ENCODE measurements at regions of chr18 and their contacts with region 1.

Region 1: DNA sequence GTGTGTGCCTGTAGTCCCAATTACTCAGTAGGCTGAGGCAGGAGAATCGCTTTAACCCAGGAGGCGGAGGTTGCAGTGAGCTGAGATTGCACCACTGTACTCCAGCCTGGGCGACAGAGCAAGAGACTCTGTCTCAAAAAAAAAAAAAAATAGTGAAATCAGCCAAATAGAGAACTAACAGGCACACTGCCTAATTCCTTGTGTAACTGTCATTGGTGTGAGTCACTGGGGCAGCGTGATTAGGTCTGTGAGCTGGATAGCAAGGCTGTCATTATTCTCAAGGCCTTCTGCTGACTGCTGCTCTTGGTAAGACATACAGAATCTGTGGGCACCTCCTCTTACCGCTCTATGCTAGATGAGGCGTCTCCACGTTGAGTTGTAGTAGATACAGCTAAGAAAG is 270.3 kb downstream of the NEDD4L start:
- DNase-seq: peak in 1 of 2 donors; percentile 46
- ATAC-seq: peak; percentile 69 to 80 (median 76)
- H3K4me3 ChIP-seq: no peak overlapping the region
- H3K27ac ChIP-seq: peak overlapping the region; percentile 23 to 79 (median 70)
- H3K4me1 ChIP-seq: peaks cover 19 to 73% (median 49%) of the 10 kb centered on the region in 9 donors
- H3K27me3 ChIP-seq: no peaks in the 10 kb centered on the region
- CTCF ChIP-seq: no peak

Region 2: GRCh38 chr18:57621246-57621604 is 693.1 kb before region 1 on chr18:
- intact Hi-C with region 1: loop called in 1 of 10 experiments (anchors 10 kb)
- DNase-seq: no peak
- ATAC-seq: peak; percentile 10 to 66 (median 46)
- H3K4me3 ChIP-seq: peak overlapping the region; percentile 71 to 89 (median 80)
- H3K27ac ChIP-seq: peak overlapping the region; percentile 72 to 95 (median 90)
- H3K4me1 ChIP-seq: peaks cover 0 to 37% (median 19%) of the 10 kb centered on the region in 9 donors
- H3K27me3 ChIP-seq: no peaks in the 10 kb centered on the region
- CTCF ChIP-seq: no peak

Region 3: DNA sequence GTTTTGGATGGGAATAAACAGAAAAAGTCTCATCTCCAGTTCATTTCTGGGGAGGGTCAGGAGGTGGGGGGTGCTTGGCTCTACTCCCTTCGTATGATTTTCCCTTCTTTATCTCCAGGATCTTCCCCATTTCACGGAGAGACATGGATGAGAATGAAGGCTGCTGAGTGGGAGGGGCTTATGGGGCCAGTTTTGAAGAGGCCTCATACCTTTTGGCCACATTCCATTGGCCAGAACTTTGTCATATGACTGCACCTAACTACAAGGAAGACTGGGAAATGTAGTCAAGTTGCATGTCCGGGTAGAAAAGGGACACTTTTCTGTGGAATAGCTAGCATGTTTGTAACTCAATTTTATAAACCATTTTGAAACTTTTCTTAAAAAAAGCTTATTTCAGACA is 152.6 kb before region 1 on chr18:
- intact Hi-C with region 1: no loop called
- DNase-seq: no peak
- ATAC-seq: no peak
- H3K4me3 ChIP-seq: no peak overlapping the region
- H3K27ac ChIP-seq: no peak overlapping the region
- H3K4me1 ChIP-seq: no peaks in the 10 kb centered on the region
- H3K27me3 ChIP-seq: no peaks in the 10 kb centered on the region
- CTCF ChIP-seq: no peak

Region 4: DNA sequence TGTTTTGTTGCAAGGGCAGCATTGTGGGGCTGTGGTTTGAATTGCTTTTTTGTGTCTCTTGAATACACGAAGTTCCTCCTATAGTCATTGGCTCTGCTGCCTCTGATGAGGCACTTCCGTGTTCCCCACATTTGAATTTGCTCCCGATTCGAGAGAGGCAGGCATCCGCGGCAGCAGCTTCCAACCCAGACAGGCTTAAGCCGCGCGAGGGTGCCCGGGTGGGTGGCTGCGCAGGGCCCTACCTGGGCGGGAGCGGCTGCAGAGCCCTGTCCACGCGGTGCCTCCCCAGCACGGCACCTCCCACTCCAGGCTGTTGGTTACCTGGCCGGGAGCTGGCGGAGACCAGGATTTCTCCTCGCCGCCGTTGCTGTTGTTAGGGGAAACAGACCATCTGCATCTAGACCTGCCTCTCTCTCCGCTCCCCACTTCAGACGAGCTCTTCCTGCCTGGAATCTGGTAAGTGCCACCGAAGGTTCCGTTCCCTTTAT is 119.0 kb before region 1 on chr18:
- intact Hi-C with region 1: loop called in 3 of 10 experiments (anchors 5 to 10 kb)
- DNase-seq: no peak
- ATAC-seq: peak; percentile 12 to 52 (median 38)
- H3K4me3 ChIP-seq: peak overlapping the region in 9 of 10 donors; percentile 18 to 55 (median 51)
- H3K27ac ChIP-seq: peak overlapping the region in 3 of 10 donors; percentile 17 to 33 (median 29)
- H3K4me1 ChIP-seq: peaks cover 0 to 30% (median 9%) of the 10 kb centered on the region in 9 donors
- H3K27me3 ChIP-seq: peaks cover 0 to 23% (median 0%) of the 10 kb centered on the region in 7 donors
- CTCF ChIP-seq: no peak

Region 5: GRCh38 chr18:58202406-58202730 is 111.9 kb before region 1 on chr18:
- intact Hi-C with region 1: loop called in 2 of 10 experiments (anchors 5 to 10 kb)
- DNase-seq: no peak
- ATAC-seq: peak in 5 of 8 donors; percentile 21 to 36 (median 24)
- H3K4me3 ChIP-seq: no peak overlapping the region
- H3K27ac ChIP-seq: peak overlapping the region in 7 of 10 donors; percentile 5 to 56 (median 28)
- H3K4me1 ChIP-seq: peaks cover 0 to 33% (median 16%) of the 10 kb centered on the region in 9 donors
- H3K27me3 ChIP-seq: no peaks in the 10 kb centered on the region
- CTCF ChIP-seq: no peak

Region 6: DNA sequence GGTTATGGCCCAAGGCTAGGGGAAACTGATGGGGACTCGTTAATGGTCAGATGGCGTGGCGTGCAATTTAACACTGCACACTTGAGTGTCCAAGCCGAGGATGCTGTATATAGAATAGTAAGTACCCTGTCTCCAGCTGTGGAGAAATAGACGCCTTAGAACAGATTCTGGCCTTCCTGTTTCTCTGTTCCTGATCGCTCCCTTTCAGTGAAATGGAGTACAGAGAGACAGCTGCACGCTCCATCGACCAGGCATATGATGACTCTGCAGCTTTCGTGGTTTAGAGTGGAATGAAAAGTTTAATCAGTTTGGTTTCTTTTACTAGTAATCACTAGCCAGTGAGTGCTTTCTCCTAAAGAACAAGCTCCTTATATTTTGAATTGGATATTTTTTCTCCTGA is 56.8 kb before region 1 on chr18:
- intact Hi-C with region 1: loop called in 7 of 10 experiments (anchors 5 to 10 kb)
- DNase-seq: no peak
- ATAC-seq: peak in 7 of 8 donors; percentile 3 to 28 (median 17)
- H3K4me3 ChIP-seq: peak overlapping the region; percentile 36 to 56 (median 50)
- H3K27ac ChIP-seq: peak overlapping the region; percentile 24 to 85 (median 82)
- H3K4me1 ChIP-seq: peaks cover 0 to 19% (median 0%) of the 10 kb centered on the region in 9 donors
- H3K27me3 ChIP-seq: no peaks in the 10 kb centered on the region
- CTCF ChIP-seq: no peak

Region 7: GRCh38 chr18:58263055-58263957 is 51.0 kb before region 1 on chr18:
- intact Hi-C with region 1: loop called in 7 of 10 experiments (anchors 5 to 10 kb)
- DNase-seq: no peak
- ATAC-seq: peak in 6 of 8 donors; percentile 41 to 79 (median 64)
- H3K4me3 ChIP-seq: peak overlapping the region in 1 of 10 donors; percentile 3
- H3K27ac ChIP-seq: peak overlapping the region; percentile 32 to 72 (median 64)
- H3K4me1 ChIP-seq: peaks cover 0 to 56% (median 0%) of the 10 kb centered on the region in 9 donors
- H3K27me3 ChIP-seq: no peaks in the 10 kb centered on the region
- CTCF ChIP-seq: no peak